ENCODE measurements at regions of chr12 and their contacts with region 1.

Region 1: GRCh38 chr12:103548622-103549601 is 38.2 kb upstream of the STAB2 start:
- DNase-seq: peak; percentile 73
- H3K4me3 ChIP-seq: no peak overlapping the region
- H3K27ac ChIP-seq: no peak overlapping the region
- H3K4me1 ChIP-seq: no peaks in the 10 kb centered on the region
- H3K27me3 ChIP-seq: no peaks in the 10 kb centered on the region
- CTCF ChIP-seq: peak; percentile 61 to 83

Region 2: GRCh38 chr12:102879144-102879763 is 669.7 kb before region 1 on chr12:
- CTCF ChIA-PET with region 1: no interaction called
- dilution Hi-C with region 1: no loop called
- in situ Hi-C with region 1: loop called (anchors 10 to 25 kb)
- intact Hi-C with region 1: loop called (anchors 1 kb)
- DNase-seq: peak; percentile 79
- H3K4me3 ChIP-seq: no peak overlapping the region
- H3K27ac ChIP-seq: no peak overlapping the region
- H3K4me1 ChIP-seq: no peaks in the 10 kb centered on the region
- H3K27me3 ChIP-seq: peaks cover 2% of the 10 kb centered on the region
- CTCF ChIP-seq: peak; percentile 46 to 57

Region 3: DNA sequence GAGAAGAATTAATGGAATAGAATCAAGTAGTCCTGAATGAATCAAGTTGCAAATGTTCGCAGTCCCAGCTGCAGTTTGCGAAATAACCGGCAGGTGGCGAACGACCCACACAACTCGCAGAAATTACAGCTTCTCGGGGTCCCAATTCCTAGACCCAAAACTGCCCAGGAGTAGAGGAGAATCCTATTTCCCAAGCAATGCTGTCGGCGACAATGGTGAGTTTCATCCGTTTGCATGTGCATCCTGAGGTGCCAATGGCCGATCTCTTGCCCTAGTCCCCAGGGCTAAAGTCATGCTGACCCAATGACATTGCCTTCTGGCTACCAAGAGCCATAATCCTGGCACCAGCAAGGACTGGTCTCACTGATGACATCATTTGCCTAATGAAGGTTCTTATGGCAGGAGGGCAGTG is 600.0 kb before region 1 on chr12:
- CTCF ChIA-PET with region 1: no interaction called
- dilution Hi-C with region 1: no loop called
- in situ Hi-C with region 1: loop called in 1 of 2 experiments (anchors 10 kb)
- intact Hi-C with region 1: loop called (anchors 1 kb)
- DNase-seq: no peak
- H3K4me3 ChIP-seq: no peak overlapping the region
- H3K27ac ChIP-seq: no peak overlapping the region
- H3K4me1 ChIP-seq: peaks cover 4% of the 10 kb centered on the region
- H3K27me3 ChIP-seq: peaks cover 25% of the 10 kb centered on the region
- CTCF ChIP-seq: peak; percentile 81 to 94

Region 4: GRCh38 chr12:103326190-103326589 is 222.7 kb before region 1 on chr12:
- CTCF ChIA-PET with region 1: no interaction called
- dilution Hi-C with region 1: no loop called
- in situ Hi-C with region 1: no loop called
- intact Hi-C with region 1: loop called (anchors 1 kb)
- DNase-seq: peak; percentile 20
- H3K4me3 ChIP-seq: no peak overlapping the region
- H3K27ac ChIP-seq: no peak overlapping the region
- H3K4me1 ChIP-seq: no peaks in the 10 kb centered on the region
- H3K27me3 ChIP-seq: no peaks in the 10 kb centered on the region
- CTCF ChIP-seq: peak; percentile 53 to 57

Region 5: DNA sequence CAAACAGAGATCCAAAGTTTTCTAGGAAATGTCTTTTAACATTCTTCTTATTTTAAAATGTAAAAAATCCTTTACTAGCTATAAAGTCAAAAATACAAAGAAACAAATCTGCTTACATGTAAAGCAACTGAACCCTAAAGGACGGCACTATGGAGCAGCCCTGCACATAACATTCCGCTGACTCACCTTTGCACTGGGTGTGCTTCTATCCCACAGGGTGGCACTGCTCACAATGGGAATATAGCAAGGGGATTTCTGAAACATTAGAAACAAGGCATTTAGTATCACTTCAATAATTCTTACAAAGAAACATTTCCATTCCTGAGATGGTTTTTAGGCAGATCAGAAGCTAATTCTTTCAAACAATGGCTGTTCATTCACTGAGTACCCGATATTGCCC is 147.5 kb before region 1 on chr12:
- CTCF ChIA-PET with region 1: no interaction called
- dilution Hi-C with region 1: no loop called
- in situ Hi-C with region 1: no loop called
- intact Hi-C with region 1: loop called (anchors 1 kb)
- DNase-seq: peak; percentile 78
- H3K4me3 ChIP-seq: no peak overlapping the region
- H3K27ac ChIP-seq: no peak overlapping the region
- H3K4me1 ChIP-seq: peaks cover 5% of the 10 kb centered on the region
- H3K27me3 ChIP-seq: no peaks in the 10 kb centered on the region
- CTCF ChIP-seq: peak; percentile 56 to 61

Region 6: DNA sequence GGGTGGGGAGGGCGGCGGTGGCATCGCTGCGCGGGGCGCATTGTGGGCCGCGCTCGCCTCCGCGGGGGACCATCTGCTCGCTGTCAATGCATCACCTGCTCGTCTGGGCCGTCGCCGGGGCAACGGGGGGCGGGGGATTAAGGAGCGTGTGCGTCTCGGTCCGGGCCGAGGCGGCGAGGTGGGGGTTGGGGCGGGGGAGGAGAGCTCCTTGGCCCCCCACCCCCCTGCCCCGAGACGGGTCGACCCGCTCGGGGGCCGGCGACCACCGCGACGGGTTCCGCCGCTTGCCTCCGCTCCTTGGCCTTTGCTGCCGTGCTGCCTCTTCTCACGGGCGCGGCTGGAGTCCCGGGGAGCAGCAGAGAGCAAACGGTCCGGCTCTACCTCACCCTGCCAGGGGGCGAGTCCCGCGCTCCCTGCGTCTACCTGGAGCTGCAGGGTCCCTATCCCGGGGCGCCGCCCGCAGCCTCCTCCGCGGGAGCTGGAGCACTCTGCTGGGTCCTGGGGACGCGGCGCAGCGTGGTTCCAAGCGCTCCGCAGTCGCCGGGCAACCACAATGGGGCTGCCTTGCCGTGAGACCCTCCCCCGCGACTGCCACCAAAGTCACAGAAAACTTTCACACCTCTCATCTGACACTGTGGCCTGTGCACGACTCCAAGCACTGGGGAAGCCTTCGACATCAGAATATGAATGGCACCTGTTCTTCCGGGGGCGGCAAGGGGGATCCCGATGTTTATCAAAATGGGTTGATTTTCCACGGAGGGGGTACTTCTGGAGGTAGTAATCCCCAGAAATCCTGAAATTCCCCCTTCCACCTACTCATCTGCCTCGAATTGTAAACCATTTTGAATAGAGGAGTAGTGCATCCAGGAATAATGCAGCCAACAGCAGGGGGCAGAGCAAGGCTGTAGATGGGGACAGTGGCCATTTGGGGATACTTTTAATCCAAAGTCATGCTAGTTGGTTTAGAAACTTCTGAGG is 53.1 kb before region 1 on chr12 and contains the start of gene C12orf42:
- CTCF ChIA-PET with region 1: interaction called, 4 read pairs
- dilution Hi-C with region 1: no loop called
- in situ Hi-C with region 1: loop called (anchors 5 kb)
- intact Hi-C with region 1: loop called (anchors 1 kb)
- DNase-seq: peak; percentile 67
- H3K4me3 ChIP-seq: peak within 1 kb of the TSS; percentile 51 to 64 (median 53)
- H3K27ac ChIP-seq: peak within 1 kb of the TSS; percentile 55
- H3K4me1 ChIP-seq: peaks cover 39% of the 10 kb centered on the region
- H3K27me3 ChIP-seq: no peaks in the 10 kb centered on the region
- CTCF ChIP-seq: peak; percentile 88 to 90
- total RNA-seq, gene C12orf42: not detected